Prostate gland (tissue), 2 donors: ENCODE measurements at regions of chr1 and their contacts with region 1.

Region 1: DNA sequence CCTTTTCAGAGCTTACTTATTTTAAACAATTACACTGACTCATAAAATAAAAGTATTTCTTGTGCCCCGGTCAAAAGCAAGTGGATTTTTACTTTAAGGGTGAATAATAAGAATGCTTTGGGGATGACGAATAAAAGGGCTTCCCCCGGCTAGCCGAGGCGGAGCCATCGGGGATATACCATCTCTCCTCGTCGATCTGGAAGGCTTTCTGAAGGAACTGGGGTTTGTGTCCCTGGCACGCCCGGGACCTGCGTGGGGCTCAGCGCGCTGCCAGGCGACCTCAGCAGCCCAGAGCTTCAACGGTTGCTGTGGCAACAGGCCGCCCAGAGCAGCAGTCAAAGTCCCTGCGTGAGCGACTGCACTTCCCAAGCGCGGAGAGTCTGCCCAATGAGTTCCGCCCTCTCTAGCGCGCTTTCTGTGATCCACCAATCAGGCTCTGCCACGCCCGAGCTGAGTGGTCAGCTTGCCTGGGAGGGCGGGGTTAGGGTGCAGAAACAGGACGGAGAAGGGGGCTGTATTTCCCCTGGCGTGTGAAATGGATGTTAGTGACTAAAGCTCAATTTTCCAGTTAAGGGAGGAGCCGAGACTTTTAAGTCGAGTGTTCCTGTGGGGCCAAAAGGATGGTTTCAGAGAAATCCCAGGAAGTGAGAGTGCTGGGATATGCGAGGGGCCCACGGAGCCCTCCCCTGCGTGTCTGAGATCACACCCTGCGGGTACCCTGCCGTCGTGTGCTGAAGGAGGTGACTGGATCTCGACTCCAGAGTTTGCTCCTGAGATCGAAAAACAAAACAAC is 33.0 kb upstream of the MGST3 start:
- DNase-seq: peak; percentile 96
- H3K4me3 ChIP-seq: peak overlapping the region; percentile 36 to 47
- H3K27ac ChIP-seq: peak overlapping the region; percentile 45 to 56
- H3K4me1 ChIP-seq: no peaks in the 10 kb centered on the region
- H3K27me3 ChIP-seq: no peaks in the 10 kb centered on the region
- CTCF ChIP-seq: peak in 1 of 4 experiments; percentile 14
- POLR2A ChIP-seq: no peak

Region 2: DNA sequence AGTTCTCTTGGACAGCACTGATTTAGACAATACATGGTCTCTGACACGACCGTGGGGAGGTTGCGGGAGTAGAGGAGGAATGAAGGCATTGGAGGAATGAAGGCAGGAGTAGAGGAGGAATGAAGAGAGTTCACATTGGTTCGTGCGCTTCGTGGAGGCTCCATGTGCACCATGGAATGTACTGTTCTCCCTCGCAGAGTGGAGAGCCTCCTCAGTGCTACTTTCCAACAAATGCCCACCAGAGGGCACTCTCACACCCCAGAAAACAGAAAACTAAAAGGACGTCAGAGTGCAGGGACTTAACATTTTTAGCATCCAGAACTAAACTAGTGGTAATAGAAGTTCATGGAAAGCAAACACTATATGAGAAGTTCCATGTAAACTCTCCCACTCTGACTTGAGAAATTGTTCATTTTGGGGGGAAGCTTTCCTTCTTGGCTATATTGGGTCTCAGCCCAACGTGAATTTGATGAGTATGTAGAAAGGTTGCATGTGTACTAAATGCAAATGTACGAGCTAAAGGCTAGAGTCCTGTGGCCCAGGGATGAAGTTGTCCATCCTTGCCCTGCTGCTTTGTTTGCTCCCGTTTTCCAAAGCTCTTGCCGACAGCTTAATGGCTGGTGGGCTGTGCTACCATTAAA is 453.2 kb before region 1 on chr1:
- intact Hi-C with region 1: loop called (anchors 10 kb)
- DNase-seq: peak; percentile 50
- H3K4me3 ChIP-seq: no peak overlapping the region
- H3K27ac ChIP-seq: no peak overlapping the region
- H3K4me1 ChIP-seq: no peaks in the 10 kb centered on the region
- H3K27me3 ChIP-seq: no peaks in the 10 kb centered on the region
- CTCF ChIP-seq: peak in 3 of 4 experiments; percentile 67 to 71 (median 67)
- POLR2A ChIP-seq: no peak

Region 3: GRCh38 chr1:165392634-165393571 is 205.2 kb before region 1 on chr1:
- intact Hi-C with region 1: loop called (anchors 1 kb)
- DNase-seq: peak; percentile 64
- H3K4me3 ChIP-seq: no peak overlapping the region
- H3K27ac ChIP-seq: no peak overlapping the region
- H3K4me1 ChIP-seq: no peaks in the 10 kb centered on the region
- H3K27me3 ChIP-seq: no peaks in the 10 kb centered on the region
- CTCF ChIP-seq: peak; percentile 77 to 87 (median 84)
- POLR2A ChIP-seq: no peak

Region 4: GRCh38 chr1:165697881-165698760 is 100.0 kb after region 1 on chr1 and contains the start of gene ALDH9A1:
- intact Hi-C with region 1: loop called (anchors 10 kb)
- DNase-seq: peak; percentile 80
- H3K4me3 ChIP-seq: peak within 1 kb of the TSS; percentile 71 to 92
- H3K27ac ChIP-seq: peak within 1 kb of the TSS; percentile 91 to 98
- H3K4me1 ChIP-seq: peaks cover 12% of the 10 kb centered on the region
- H3K27me3 ChIP-seq: no peaks in the 10 kb centered on the region
- CTCF ChIP-seq: peak in 3 of 4 experiments; percentile 31 to 43 (median 40)
- POLR2A ChIP-seq: peak; percentile 93
- total RNA-seq, gene ALDH9A1: 172 to 206 TPM

Region 5: GRCh38 chr1:165768513-165769394 is 170.7 kb after region 1 on chr1 and contains the start of gene TMCO1:
- intact Hi-C with region 1: loop called (anchors 2 kb)
- DNase-seq: peak; percentile 96
- H3K4me3 ChIP-seq: peak within 1 kb of the TSS; percentile 44 to 60
- H3K27ac ChIP-seq: peak within 1 kb of the TSS; percentile 74 to 78
- H3K4me1 ChIP-seq: peaks cover 3% of the 10 kb centered on the region
- H3K27me3 ChIP-seq: no peaks in the 10 kb centered on the region
- CTCF ChIP-seq: peak in 3 of 4 experiments; percentile 9 to 32 (median 20)
- POLR2A ChIP-seq: peak; percentile 45
- total RNA-seq, gene TMCO1: 90.8 to 120 TPM